ENCODE measurements at regions of chr9 and their contacts with region 1.

Region 1: GRCh38 chr9:97598461-97599288 is 34.5 kb downstream of the TSTD2 start:
- DNase-seq: peak; percentile 81
- CTCF ChIP-seq: peak; percentile 77

Region 2: GRCh38 chr9:96854073-96854876 is 744.4 kb before region 1 on chr9 and contains the start of gene ZNF782:
- CTCF ChIA-PET with region 1: interaction called, 24 read pairs
- POLR2A ChIA-PET with region 1: no interaction called
- DNase-seq: peak; percentile 91
- CTCF ChIP-seq: no peak

Region 3: GRCh38 chr9:97459099-97459725 is 139.5 kb before region 1 on chr9:
- CTCF ChIA-PET with region 1: interaction called, 25 read pairs
- POLR2A ChIA-PET with region 1: no interaction called
- DNase-seq: no peak
- CTCF ChIP-seq: no peak

Region 4: DNA sequence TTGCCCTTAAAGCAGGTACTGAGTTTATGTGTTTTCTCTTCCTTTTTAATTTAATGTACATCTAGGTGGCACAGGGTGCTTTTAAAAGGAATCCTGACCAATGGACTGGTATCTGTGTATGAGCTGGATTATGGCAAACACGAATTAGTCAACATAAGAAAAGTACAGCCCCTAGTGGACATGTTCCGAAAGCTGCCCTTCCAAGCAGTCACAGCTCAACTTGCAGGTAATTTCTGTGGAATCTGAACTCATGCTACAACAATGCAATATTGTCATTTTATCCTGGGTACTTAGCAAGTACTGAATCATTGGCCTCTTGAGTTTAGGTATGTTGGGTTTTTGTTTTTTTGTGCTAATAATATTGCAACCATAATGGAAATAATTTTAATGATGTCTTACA is 111.6 kb before region 1 on chr9:
- CTCF ChIA-PET with region 1: interaction called, 18 read pairs
- POLR2A ChIA-PET with region 1: no interaction called
- DNase-seq: no peak
- CTCF ChIP-seq: no peak

Region 5: GRCh38 chr9:97528529-97529230 is 70.0 kb before region 1 on chr9:
- CTCF ChIA-PET with region 1: interaction called, 22 read pairs
- POLR2A ChIA-PET with region 1: no interaction called
- DNase-seq: peak; percentile 42
- CTCF ChIP-seq: no peak

Region 6: DNA sequence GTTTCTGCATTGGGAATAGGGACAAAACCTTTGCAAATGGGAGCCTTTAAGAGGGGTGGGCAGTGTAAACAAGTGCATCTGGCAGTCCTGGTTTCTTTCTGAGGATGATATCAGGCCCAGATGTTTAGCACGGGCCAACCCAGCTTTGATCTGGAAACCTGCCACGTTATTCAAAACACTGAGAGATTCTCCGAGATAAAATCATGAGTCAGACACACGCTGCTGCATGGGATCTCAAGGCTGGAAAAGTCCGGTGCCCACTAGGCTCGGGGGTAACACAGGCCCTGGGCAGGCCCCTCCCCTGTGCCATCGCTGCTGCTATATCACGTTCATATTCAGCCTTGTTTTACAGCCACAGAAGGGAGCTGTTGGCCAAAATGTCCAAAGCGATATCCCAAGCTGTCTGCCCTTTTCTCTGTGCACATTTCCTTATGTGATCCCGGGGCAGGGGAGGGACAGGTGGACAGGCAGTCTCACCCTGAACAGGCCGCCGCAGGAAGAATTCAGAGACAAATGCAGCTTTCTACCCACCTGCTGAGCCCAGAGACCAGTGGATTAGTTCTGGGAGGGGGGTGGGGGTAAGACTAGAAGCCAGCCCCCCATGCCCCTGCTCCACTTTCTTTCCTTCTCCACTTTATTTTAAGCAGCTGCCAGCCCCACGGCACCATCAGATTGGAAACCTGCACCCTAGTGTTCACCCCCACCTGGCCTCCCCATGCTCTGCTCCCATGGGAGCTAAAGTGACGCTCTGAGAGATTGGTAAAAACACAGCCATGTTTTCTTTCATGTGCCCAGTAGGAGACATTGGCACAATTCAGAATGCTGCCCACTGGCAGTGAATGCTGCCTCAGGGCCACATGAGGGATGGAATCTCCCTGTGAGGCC is 34.1 kb before region 1 on chr9:
- CTCF ChIA-PET with region 1: interaction called, 34 read pairs
- POLR2A ChIA-PET with region 1: no interaction called
- DNase-seq: no peak
- CTCF ChIP-seq: no peak

Region 7: GRCh38 chr9:97632985-97633858 is 34.5 kb after region 1 on chr9 and contains the starts of genes NCBP1 and TSTD2:
- CTCF ChIA-PET with region 1: interaction called, 15 read pairs
- POLR2A ChIA-PET with region 1: no interaction called
- DNase-seq: peak; percentile 94
- CTCF ChIP-seq: no peak

Region 8: DNA sequence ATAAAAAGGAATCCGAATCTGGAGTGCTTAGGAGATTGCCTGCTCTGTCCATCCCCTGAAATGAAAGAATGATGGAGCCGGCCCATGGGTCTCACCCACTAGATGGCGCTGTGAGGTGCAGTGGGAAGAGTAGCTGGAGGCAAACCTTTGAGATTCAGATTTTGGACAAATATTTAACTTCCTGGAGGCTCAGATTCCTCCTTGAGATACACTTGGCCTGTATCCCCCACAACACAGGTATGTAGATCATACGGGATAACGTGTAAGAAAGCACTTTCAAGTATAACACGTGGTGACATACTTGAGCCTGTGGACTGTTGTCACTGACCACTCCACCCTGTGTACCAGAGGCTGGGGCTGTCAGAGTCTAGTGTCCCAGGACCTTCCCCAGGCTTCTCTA is 291.4 kb after region 1 on chr9:
- CTCF ChIA-PET with region 1: no interaction called
- POLR2A ChIA-PET with region 1: no interaction called
- DNase-seq: peak; percentile 65
- CTCF ChIP-seq: peak; percentile 66

Measured in GM10248 (cell line).